ENCODE measurements at regions of chr17 and their contacts with region 1.

Region 1: GRCh38 chr17:40531051-40531991 is 29.9 kb upstream of the TNS4 start:
- DNase-seq: no peak
- H3K4me3 ChIP-seq: no peak overlapping the region
- H3K4me3 Mint-ChIP-seq: no peak overlapping the region
- H3K27ac Mint-ChIP-seq: no peak overlapping the region
- H3K4me1 ChIP-seq: 0 out of 2 replicates have a peak, but pooled peaks cover 9% of the 10 kb centered on the region
- H3K4me1 Mint-ChIP-seq: no peaks in the 10 kb centered on the region
- H3K27me3 ChIP-seq: no peaks in the 10 kb centered on the region
- H3K27me3 Mint-ChIP-seq: no peaks in the 10 kb centered on the region
- CTCF ChIP-seq: no peak

Region 2: DNA sequence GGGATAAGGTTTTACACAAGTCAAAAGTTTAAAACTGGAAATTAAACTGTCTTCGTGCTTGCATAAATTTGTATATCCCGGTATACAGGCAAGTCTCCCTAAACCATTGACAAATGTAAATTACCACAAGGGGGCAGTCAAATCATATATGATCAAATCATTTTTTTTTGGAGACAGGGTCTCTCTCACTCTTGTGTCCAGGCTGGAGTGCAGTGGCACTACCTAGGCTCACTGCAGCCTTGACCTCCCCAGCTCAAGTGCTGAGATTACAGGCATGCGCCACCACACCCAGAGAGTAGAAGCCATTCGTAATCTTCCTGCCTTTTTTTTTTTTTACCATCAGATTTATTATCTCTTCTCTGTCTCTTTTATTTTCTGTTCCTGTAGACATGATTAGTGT is 132.1 kb before region 1 on chr17:
- CTCF ChIA-PET with region 1: no interaction called
- POLR2A ChIA-PET with region 1: no interaction called
- intact Hi-C with region 1: loop called (anchors 1 kb)
- DNase-seq: peak in 1 of 2 experiments; percentile 34
- H3K4me3 ChIP-seq: no peak overlapping the region
- H3K4me3 Mint-ChIP-seq: no peak overlapping the region
- H3K27ac Mint-ChIP-seq: no peak overlapping the region
- H3K4me1 ChIP-seq: 0 out of 2 replicates have a peak, but pooled peaks cover 3% of the 10 kb centered on the region
- H3K4me1 Mint-ChIP-seq: no peaks in the 10 kb centered on the region
- H3K27me3 ChIP-seq: no peaks in the 10 kb centered on the region
- H3K27me3 Mint-ChIP-seq: no peaks in the 10 kb centered on the region
- CTCF ChIP-seq: peak; percentile 36 to 68

Region 3: GRCh38 chr17:40443583-40444327 is 87.6 kb before region 1 on chr17:
- CTCF ChIA-PET with region 1: interaction called, 30 read pairs
- POLR2A ChIA-PET with region 1: no interaction called
- intact Hi-C with region 1: loop called (anchors 1 kb)
- DNase-seq: peak; percentile 81 to 89
- H3K4me3 ChIP-seq: peak overlapping the region; percentile 61
- H3K4me3 Mint-ChIP-seq: peak overlapping the region; percentile 26
- H3K27ac Mint-ChIP-seq: no peak overlapping the region
- H3K4me1 ChIP-seq: peaks cover 14% of the 10 kb centered on the region
- H3K4me1 Mint-ChIP-seq: peaks cover 20% of the 10 kb centered on the region
- H3K27me3 ChIP-seq: no peaks in the 10 kb centered on the region
- H3K27me3 Mint-ChIP-seq: no peaks in the 10 kb centered on the region
- CTCF ChIP-seq: peak; percentile 40 to 78

Region 4: GRCh38 chr17:40474419-40475002 is 56.8 kb before region 1 on chr17:
- CTCF ChIA-PET with region 1: interaction called, 15 read pairs
- POLR2A ChIA-PET with region 1: no interaction called
- intact Hi-C with region 1: no loop called
- DNase-seq: no peak
- H3K4me3 ChIP-seq: no peak overlapping the region
- H3K4me3 Mint-ChIP-seq: no peak overlapping the region
- H3K27ac Mint-ChIP-seq: no peak overlapping the region
- H3K4me1 ChIP-seq: no peaks in the 10 kb centered on the region
- H3K4me1 Mint-ChIP-seq: no peaks in the 10 kb centered on the region
- H3K27me3 ChIP-seq: no peaks in the 10 kb centered on the region
- H3K27me3 Mint-ChIP-seq: no peaks in the 10 kb centered on the region
- CTCF ChIP-seq: no peak

Region 5: GRCh38 chr17:40551879-40552768 is 20.8 kb after region 1 on chr17:
- CTCF ChIA-PET with region 1: interaction called, 15 read pairs
- POLR2A ChIA-PET with region 1: no interaction called
- intact Hi-C with region 1: no loop called
- DNase-seq: peak; percentile 55 to 56
- H3K4me3 ChIP-seq: no peak overlapping the region
- H3K4me3 Mint-ChIP-seq: peak overlapping the region; percentile 32
- H3K27ac Mint-ChIP-seq: peak overlapping the region; percentile 65
- H3K4me1 ChIP-seq: peaks cover 53% of the 10 kb centered on the region
- H3K4me1 Mint-ChIP-seq: peaks cover 36% of the 10 kb centered on the region
- H3K27me3 ChIP-seq: no peaks in the 10 kb centered on the region
- H3K27me3 Mint-ChIP-seq: no peaks in the 10 kb centered on the region
- CTCF ChIP-seq: no peak

Measured in Caco-2 (cell line).